GM12878 (cell line): ENCODE measurements at regions of chr9 and their contacts with region 1.

Region 1: DNA sequence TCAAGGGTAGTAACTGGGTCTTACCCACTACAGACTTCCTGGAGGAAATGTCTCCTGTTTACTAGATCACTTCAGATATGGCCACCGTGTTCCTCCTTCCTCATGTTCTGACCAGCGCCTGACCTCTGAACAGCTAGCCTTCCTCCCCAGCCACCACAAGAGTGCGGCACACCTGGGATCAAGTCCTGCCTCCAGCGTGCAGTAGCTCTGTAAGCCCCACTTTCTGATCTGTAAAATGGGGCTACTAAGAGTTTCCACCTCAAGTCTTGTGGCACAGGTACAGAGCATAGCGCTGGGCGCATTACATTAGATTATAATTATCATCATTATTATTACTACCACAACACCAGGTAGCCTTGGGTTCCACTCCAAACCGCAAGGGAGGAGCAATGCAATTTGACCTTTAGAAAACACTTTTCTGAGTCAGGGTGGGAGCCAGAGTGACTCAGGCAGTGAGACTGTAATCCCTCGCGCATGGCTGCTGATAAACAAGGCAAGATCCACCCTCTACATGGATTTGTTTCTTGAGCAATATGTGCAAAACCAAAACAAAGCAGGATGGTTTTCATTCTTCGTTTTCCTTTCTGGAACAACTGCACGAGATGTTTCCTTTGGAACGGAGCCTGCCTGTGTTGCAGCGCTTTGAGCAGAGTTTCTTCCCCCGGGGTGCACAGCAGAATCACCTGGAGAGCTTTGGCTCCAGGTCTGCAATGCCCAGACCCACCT is 65.0 kb upstream of the ANGPTL2 start:
- DNase-seq: no peak
- ATAC-seq: no peak
- H3K4me3 ChIP-seq: no peak overlapping the region
- H3K27ac ChIP-seq: no peak overlapping the region
- H3K4me1 ChIP-seq: peaks cover 26% of the 10 kb centered on the region
- H3K27me3 ChIP-seq: no peaks in the 10 kb centered on the region
- CTCF ChIP-seq: no peak
- EP300 ChIP-seq: no peak
- POLR2A ChIP-seq: no peak
- RAD21 ChIP-seq: no peak

Region 2: GRCh38 chr9:126939821-126940221 is 247.6 kb before region 1 on chr9:
- CTCF ChIA-PET with region 1: no interaction called
- POLR2A ChIA-PET with region 1: interaction called, 4 read pairs
- RAD21 ChIA-PET with region 1: interaction called, 16 read pairs
- SMC1A ChIA-PET with region 1: interaction called, 5 read pairs
- in situ Hi-C with region 1: no loop called
- intact Hi-C with region 1: no loop called
- DNase-seq: no peak
- ATAC-seq: no peak
- H3K4me3 ChIP-seq: no peak overlapping the region
- H3K27ac ChIP-seq: no peak overlapping the region
- H3K4me1 ChIP-seq: no peaks in the 10 kb centered on the region
- H3K27me3 ChIP-seq: no peaks in the 10 kb centered on the region
- CTCF ChIP-seq: no peak
- EP300 ChIP-seq: no peak
- POLR2A ChIP-seq: no peak
- RAD21 ChIP-seq: no peak

Region 3: DNA sequence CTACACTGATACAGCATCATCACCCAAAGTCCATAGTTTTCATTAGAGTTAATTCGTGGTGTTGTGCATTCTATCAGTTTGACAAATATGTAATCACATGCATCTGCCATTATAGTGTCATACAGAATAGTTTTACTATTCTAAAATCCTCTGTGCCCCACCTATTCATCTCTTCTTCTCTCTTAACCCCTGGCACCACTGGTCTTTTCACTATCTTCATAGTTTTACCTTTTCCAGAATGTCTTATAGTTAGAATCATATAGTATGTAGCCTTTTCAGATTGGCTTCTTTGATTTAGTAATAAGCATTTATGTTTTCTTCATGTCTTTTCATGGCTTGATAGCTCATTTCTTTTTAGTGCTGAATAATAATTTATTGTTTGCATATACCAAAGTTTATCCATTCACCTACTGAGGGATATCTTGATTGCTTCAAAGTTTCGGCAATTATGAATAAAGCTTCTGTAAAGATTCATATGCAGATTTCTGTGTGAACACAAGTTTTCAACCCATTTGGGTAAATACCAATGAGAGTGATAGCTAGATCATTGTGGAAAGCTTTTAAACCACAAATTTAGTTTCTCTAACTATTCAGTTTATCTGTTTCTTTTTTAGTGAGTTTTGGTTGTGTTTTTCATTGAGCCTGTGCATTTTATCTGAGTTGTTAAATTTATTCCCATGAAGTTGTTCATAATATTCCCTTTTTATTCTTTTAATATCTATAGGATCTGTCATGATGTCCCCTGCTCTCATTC is 187.9 kb before region 1 on chr9:
- CTCF ChIA-PET with region 1: interaction called, 3 read pairs
- POLR2A ChIA-PET with region 1: interaction called, 11 read pairs
- RAD21 ChIA-PET with region 1: interaction called, 57 read pairs
- SMC1A ChIA-PET with region 1: interaction called, 51 read pairs
- in situ Hi-C with region 1: no loop called
- intact Hi-C with region 1: no loop called
- DNase-seq: no peak
- ATAC-seq: peak; percentile 86
- H3K4me3 ChIP-seq: no peak overlapping the region
- H3K27ac ChIP-seq: peak overlapping the region; percentile 33; the same call in 1 of the 2 replicates
- H3K4me1 ChIP-seq: peaks cover 27% of the 10 kb centered on the region
- H3K27me3 ChIP-seq: no peaks in the 10 kb centered on the region
- CTCF ChIP-seq: no peak
- EP300 ChIP-seq: no peak
- POLR2A ChIP-seq: no peak
- RAD21 ChIP-seq: no peak

Region 4: DNA sequence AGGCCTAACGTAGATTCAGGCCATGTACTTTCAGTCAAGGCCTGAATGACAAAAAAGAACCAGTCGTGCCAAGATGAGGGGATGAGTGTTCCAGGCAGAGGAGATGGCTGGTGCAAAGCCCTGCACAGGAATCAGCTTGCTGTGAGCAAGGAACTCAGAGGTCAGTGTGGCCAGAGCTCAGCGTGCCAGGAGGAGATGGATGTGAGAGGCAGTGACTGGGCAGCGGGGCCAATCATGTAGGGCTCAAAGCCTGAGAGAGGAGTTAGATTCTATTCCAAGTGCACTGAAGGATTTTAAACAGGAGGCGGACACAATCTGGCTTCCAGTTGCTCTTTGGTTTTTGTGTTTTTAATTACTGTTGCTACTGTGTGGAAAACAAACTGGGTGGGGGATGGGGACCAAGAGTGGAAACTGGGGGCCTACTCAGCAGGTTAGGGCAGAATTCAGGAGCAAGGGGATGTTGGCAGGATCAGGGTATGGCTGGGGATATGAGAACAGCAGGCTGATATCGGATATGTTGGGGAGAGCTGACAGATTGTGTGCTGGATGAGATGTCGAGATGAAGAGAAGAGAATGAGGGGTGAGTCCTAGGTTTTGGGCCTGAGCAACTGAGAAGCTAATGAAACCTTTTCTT is 129.3 kb before region 1 on chr9:
- CTCF ChIA-PET with region 1: interaction called, 5 read pairs
- POLR2A ChIA-PET with region 1: interaction called, 6 read pairs
- RAD21 ChIA-PET with region 1: interaction called, 41 read pairs
- SMC1A ChIA-PET with region 1: interaction called, 23 read pairs
- in situ Hi-C with region 1: no loop called
- intact Hi-C with region 1: no loop called
- DNase-seq: no peak
- ATAC-seq: no peak
- H3K4me3 ChIP-seq: no peak overlapping the region
- H3K27ac ChIP-seq: no peak overlapping the region
- H3K4me1 ChIP-seq: peaks cover 5% of the 10 kb centered on the region
- H3K27me3 ChIP-seq: no peaks in the 10 kb centered on the region
- CTCF ChIP-seq: no peak
- EP300 ChIP-seq: no peak
- POLR2A ChIP-seq: no peak
- RAD21 ChIP-seq: no peak

Region 5: GRCh38 chr9:127116957-127117356 is 70.4 kb before region 1 on chr9:
- CTCF ChIA-PET with region 1: no interaction called
- POLR2A ChIA-PET with region 1: interaction called, 13 read pairs
- RAD21 ChIA-PET with region 1: interaction called, 10 read pairs
- SMC1A ChIA-PET with region 1: interaction called, 7 read pairs
- in situ Hi-C with region 1: no loop called
- intact Hi-C with region 1: no loop called
- DNase-seq: no peak
- ATAC-seq: peak; percentile 50
- H3K4me3 ChIP-seq: no peak overlapping the region
- H3K27ac ChIP-seq: no peak overlapping the region
- H3K4me1 ChIP-seq: peaks cover 21% of the 10 kb centered on the region
- H3K27me3 ChIP-seq: no peaks in the 10 kb centered on the region
- CTCF ChIP-seq: no peak
- EP300 ChIP-seq: no peak
- POLR2A ChIP-seq: no peak
- RAD21 ChIP-seq: 0 out of 2 replicates have a peak, but pooled peaks have one; percentile 0

Region 6: GRCh38 chr9:127172026-127172707 is 15.2 kb before region 1 on chr9:
- CTCF ChIA-PET with region 1: interaction called, 174 read pairs
- POLR2A ChIA-PET with region 1: interaction called, 270 read pairs
- RAD21 ChIA-PET with region 1: interaction called, 515 read pairs
- SMC1A ChIA-PET with region 1: interaction called, 812 read pairs
- in situ Hi-C with region 1: no loop called
- intact Hi-C with region 1: loop called (anchors 1 kb)
- DNase-seq: no peak
- ATAC-seq: no peak
- H3K4me3 ChIP-seq: no peak overlapping the region
- H3K27ac ChIP-seq: no peak overlapping the region
- H3K4me1 ChIP-seq: peaks cover 6% of the 10 kb centered on the region
- H3K27me3 ChIP-seq: no peaks in the 10 kb centered on the region
- CTCF ChIP-seq: no peak
- EP300 ChIP-seq: no peak
- POLR2A ChIP-seq: no peak
- RAD21 ChIP-seq: no peak

Region 7: GRCh38 chr9:127224178-127224882 is 36.9 kb after region 1 on chr9:
- CTCF ChIA-PET with region 1: no interaction called
- POLR2A ChIA-PET with region 1: no interaction called
- RAD21 ChIA-PET with region 1: no interaction called
- SMC1A ChIA-PET with region 1: no interaction called
- in situ Hi-C with region 1: no loop called
- intact Hi-C with region 1: no loop called
- DNase-seq: peak; percentile 56
- ATAC-seq: peak; percentile 85
- H3K4me3 ChIP-seq: peak overlapping the region; percentile 67; the same call in 1 of the 2 replicates
- H3K27ac ChIP-seq: peak overlapping the region; percentile 43; the same call in 1 of the 2 replicates
- H3K4me1 ChIP-seq: peaks cover 27% of the 10 kb centered on the region
- H3K27me3 ChIP-seq: peaks cover 0 to 2% of the 10 kb centered on the region in 2 experiments; a peak in 2 of 4 replicates
- CTCF ChIP-seq: 0 out of 6 replicates have a peak, but pooled peaks of 1 of the 3 experiments have one; percentile 3
- EP300 ChIP-seq: no peak
- POLR2A ChIP-seq: peak; percentile 76
- RAD21 ChIP-seq: no peak